ENCODE measurements at regions of chr1 and their contacts with region 1.

Region 1: DNA sequence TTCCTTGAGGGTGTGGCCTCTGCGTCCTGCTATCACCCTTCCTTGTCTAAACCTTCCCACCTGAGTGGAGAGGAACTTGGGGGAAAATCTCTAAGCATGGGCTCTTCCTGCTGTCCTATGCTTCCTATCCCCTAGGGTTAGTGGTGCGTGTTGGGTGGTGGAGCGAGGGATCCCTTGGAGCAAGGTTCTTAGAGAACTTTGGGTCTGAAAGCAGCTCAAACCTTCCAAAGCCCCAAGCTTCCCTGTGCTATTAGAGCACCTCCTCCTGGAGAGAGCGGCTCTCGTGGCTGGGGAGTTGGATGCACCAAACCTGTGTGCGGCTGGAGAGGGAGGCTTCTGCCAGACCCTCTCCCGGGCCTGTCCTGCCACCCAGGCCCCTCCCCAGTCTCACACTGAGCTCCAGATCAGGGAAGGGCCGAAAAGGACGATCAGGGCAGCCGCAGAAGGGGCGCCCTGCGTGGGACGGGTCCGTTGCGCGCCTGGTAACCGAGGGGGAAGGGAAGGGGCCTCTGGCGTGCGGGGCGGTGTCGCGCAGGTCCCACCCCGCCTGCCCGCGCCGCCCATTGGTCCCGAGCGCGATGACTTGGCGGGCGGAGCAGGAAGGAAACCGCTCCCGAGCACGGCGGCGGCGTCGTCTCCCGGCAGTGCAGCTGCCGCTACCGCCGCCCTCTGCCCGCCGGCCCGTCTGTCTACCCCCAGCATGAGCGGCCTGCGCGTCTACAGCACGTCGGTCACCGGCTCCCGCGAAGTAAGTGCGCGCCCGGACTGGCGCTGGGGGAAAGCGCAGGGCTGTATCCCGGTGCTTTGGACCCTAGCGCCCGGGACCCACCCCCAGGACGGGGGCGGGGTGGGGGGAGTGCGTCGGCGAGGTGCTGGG is at the start of gene SH3BGRL3:
- DNase-seq: peak; percentile 90
- ATAC-seq: peak; percentile 64
- H3K4me3 Mint-ChIP-seq: peak within 1 kb of the TSS; percentile 89
- H3K27ac Mint-ChIP-seq: peak within 1 kb of the TSS; percentile 96
- H3K4me1 Mint-ChIP-seq: peaks cover 85% of the 10 kb centered on the region
- H3K27me3 Mint-ChIP-seq: no peaks in the 10 kb centered on the region
- total RNA-seq, gene SH3BGRL3: 795 to 814 TPM

Region 2: GRCh38 chr1:26265405-26265804 is 14.3 kb before region 1 on chr1:
- CTCF ChIA-PET with region 1: interaction called, 11 read pairs
- POLR2A ChIA-PET with region 1: no interaction called
- DNase-seq: no peak
- ATAC-seq: no peak
- H3K4me3 Mint-ChIP-seq: no peak overlapping the region
- H3K27ac Mint-ChIP-seq: no peak overlapping the region
- H3K4me1 Mint-ChIP-seq: no peaks in the 10 kb centered on the region
- H3K27me3 Mint-ChIP-seq: no peaks in the 10 kb centered on the region

Region 3: DNA sequence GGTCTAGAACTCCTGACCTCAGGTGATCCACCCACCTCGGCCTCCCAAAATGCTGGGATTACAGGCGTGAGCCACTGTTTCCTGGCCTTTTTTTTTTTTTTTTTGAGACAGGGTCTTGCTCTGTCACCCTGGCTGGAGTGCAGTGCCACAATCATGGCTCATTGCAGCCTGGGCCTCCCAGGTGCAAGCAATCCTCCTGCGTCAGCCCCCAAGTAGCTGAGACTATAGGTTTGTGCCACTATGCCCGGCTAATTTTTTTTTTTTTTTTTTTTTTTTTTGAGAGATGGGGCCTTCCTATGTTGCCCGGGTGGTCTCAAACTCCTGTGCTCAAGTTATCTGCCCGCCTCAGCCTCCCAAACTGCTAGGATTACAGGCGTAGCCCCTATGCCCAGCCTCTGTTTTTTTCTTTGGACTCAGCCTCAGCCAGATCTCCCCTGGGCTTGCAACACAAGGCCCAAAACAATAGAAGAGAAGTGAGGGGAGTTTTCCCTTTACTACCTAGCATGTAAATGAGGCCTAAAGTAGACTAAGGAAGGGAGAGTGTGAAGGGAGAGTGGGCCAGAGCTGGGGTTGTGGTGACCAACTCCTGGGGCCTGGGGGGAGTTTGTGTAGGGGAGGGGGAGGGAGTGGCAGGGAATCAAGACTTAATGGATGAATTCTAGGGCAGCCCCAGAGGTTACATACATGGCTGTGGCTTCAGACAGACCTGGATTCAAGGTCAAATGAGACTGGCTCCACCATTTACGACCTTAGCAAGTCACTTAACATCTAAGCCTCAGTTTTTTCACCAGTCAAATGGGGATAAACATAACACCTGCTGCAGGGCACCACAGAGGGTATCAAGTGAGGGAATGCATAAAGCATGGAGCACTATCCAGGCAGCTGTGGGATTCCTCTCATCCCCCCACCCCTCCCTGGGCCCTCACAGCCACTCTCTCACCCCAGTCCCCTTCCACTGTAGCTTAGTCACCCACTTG is 36.5 kb after region 1 on chr1:
- CTCF ChIA-PET with region 1: interaction called, 591 read pairs
- POLR2A ChIA-PET with region 1: interaction called, 409 read pairs
- DNase-seq: no peak
- ATAC-seq: no peak
- H3K4me3 Mint-ChIP-seq: peak overlapping the region; percentile 84
- H3K27ac Mint-ChIP-seq: peak overlapping the region; percentile 75
- H3K4me1 Mint-ChIP-seq: peaks cover 61% of the 10 kb centered on the region
- H3K27me3 Mint-ChIP-seq: no peaks in the 10 kb centered on the region

Region 4: DNA sequence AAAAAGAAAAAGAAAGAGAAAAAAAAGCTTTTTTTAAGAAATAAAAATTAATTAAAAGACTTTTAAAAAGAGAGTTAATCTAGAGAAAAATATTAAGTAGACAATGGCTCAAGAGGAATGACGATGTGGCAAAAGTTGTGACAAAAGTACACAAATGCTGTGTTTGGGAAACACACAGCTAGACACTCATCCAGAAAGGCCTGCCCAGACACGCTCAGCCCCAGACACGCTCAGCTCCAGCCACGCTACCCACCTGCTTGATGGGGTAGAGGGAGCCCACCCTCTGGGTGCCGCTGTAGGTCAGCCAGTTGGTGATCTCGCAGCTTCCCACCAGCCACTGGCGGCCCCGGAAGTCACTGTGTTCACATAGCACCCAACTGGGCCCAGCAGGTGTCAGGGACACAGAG is 48.3 kb after region 1 on chr1:
- CTCF ChIA-PET with region 1: interaction called, 591 read pairs
- POLR2A ChIA-PET with region 1: interaction called, 409 read pairs
- DNase-seq: no peak
- ATAC-seq: no peak
- H3K4me3 Mint-ChIP-seq: no peak overlapping the region
- H3K27ac Mint-ChIP-seq: peak overlapping the region; percentile 20
- H3K4me1 Mint-ChIP-seq: peaks cover 11% of the 10 kb centered on the region
- H3K27me3 Mint-ChIP-seq: no peaks in the 10 kb centered on the region

Region 5: GRCh38 chr1:26391450-26391849 is 111.8 kb after region 1 on chr1:
- CTCF ChIA-PET with region 1: interaction called, 57 read pairs
- POLR2A ChIA-PET with region 1: interaction called, 6 read pairs
- DNase-seq: peak; percentile 78
- ATAC-seq: peak; percentile 73
- H3K4me3 Mint-ChIP-seq: no peak overlapping the region
- H3K27ac Mint-ChIP-seq: peak overlapping the region; percentile 35
- H3K4me1 Mint-ChIP-seq: peaks cover 61% of the 10 kb centered on the region
- H3K27me3 Mint-ChIP-seq: peaks cover 3% of the 10 kb centered on the region

Measured in activated CD8-positive, alpha-beta T cell treated with anti-CD3 and anti-CD28 coated beads, Interleukin-2, amount 10 ng/mL, durations not matched to agents 7 days and 5 days (primary cell).